HepG2 (cell line): ENCODE measurements at regions of chrX and their contacts with region 1.

Region 1: GRCh38 chrX:76183289-76184049 is 10.6 kb downstream of the PBDC1 start:
- DNase-seq: peak; percentile 59
- ATAC-seq: peak; percentile 77
- H3K4me3 ChIP-seq: 0 out of 6 replicates have a peak overlapping the region, but pooled peaks of 1 of the 3 experiments have one; percentile 23
- H3K27ac ChIP-seq: peak overlapping the region; percentile 55
- H3K4me1 ChIP-seq: peaks cover 44% of the 10 kb centered on the region
- H3K27me3 ChIP-seq: no peaks in the 10 kb centered on the region
- CTCF ChIP-seq: no peak
- EP300 ChIP-seq: no peak; a peak in 1 of 4 replicates
- POLR2A ChIP-seq: no peak
- RAD21 ChIP-seq: no peak

Region 2: GRCh38 chrX:76029385-76029784 is 154.1 kb before region 1 on chrX:
- CTCF ChIA-PET with region 1: no interaction called
- POLR2A ChIA-PET with region 1: no interaction called
- in situ Hi-C with region 1: no loop called
- intact Hi-C with region 1: no loop called
- DNase-seq: no peak
- ATAC-seq: no peak
- H3K4me3 ChIP-seq: no peak overlapping the region
- H3K27ac ChIP-seq: no peak overlapping the region
- H3K4me1 ChIP-seq: no peaks in the 10 kb centered on the region
- H3K27me3 ChIP-seq: no peaks in the 10 kb centered on the region
- CTCF ChIP-seq: no peak
- EP300 ChIP-seq: no peak
- POLR2A ChIP-seq: no peak
- RAD21 ChIP-seq: no peak

Region 3: DNA sequence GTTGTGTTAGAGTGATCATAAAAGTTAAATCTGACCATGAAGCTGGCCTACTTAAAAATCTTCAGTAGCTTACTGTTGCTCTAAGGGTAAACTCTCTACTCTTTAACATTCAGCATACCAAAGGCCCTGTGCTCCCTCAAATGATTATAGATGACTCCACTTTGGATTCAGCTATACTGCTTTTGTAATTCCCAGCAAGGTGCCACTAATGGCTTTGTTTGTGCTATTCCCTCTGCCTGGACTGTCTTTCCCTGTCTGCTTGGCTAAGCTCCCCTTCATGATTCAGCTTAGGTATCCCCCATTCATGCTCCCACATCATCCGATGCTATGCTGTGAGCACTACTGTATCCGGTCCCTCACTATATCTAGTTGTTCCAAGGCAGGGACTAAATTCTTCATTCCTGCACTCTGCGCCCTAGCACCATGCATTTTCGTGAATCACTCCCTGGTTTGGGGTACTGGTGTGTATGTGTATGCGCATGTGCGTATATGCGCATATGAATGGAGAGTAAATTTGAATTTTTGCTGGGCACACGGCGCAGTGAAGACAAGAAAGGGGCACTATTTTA is 11.1 kb before region 1 on chrX:
- CTCF ChIA-PET with region 1: no interaction called
- POLR2A ChIA-PET with region 1: interaction called, 42 read pairs
- in situ Hi-C with region 1: no loop called
- intact Hi-C with region 1: no loop called
- DNase-seq: no peak
- ATAC-seq: peak; percentile 78
- H3K4me3 ChIP-seq: peak overlapping the region; percentile 70 to 74 (median 71); a peak in 5 of 6 replicates
- H3K27ac ChIP-seq: peak overlapping the region; percentile 83
- H3K4me1 ChIP-seq: peaks cover 22% of the 10 kb centered on the region
- H3K27me3 ChIP-seq: no peaks in the 10 kb centered on the region
- CTCF ChIP-seq: no peak
- EP300 ChIP-seq: no peak
- POLR2A ChIP-seq: no peak
- RAD21 ChIP-seq: no peak